ENCODE measurements at regions of chr9 and their contacts with region 1.

Region 1: DNA sequence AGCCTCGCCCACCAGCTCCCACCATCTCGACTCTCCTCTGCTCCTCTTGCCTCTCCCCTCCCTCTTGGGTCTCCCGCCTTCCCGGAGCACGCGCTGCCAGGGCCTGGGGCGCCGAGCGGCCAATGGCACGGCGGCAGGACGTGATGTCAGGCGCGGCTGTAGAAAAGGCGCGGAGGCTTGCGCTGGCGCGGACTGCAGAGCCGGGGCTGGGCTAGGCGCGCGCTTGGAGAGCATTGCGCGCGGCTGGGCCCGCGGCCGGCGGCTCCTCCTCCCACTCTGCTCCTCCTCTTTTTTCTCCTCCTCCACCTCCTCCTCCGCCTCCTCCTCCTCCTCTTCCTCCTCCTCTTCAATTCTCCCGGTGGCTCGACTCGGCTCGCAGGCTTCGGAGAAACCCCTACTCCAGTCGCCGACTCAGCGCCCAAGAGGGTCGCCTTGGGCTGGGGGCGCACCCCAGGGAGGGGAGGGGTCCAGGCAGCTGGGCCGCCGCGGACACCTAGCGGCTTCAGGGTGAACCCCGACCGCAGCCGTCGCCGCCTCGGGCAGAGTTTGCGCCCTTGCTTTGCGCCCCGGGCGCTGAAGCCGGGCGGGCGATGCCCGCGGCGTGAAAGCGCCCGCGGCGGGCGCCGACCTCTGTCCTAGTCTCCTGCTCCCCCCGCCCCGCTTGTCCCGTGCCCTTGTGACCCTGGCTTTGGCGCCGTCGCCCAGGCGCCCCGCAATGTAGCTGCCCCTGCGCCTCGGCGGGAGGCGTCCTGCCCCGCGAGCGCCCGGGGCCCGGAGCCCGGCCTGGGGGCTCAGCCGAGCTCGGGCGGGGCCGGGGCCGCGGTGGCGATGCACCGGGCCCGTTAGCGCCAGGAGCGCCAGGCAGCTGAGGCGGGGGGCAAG is at the start of gene LHX2:
- DNase-seq: peak; percentile 85

Region 2: DNA sequence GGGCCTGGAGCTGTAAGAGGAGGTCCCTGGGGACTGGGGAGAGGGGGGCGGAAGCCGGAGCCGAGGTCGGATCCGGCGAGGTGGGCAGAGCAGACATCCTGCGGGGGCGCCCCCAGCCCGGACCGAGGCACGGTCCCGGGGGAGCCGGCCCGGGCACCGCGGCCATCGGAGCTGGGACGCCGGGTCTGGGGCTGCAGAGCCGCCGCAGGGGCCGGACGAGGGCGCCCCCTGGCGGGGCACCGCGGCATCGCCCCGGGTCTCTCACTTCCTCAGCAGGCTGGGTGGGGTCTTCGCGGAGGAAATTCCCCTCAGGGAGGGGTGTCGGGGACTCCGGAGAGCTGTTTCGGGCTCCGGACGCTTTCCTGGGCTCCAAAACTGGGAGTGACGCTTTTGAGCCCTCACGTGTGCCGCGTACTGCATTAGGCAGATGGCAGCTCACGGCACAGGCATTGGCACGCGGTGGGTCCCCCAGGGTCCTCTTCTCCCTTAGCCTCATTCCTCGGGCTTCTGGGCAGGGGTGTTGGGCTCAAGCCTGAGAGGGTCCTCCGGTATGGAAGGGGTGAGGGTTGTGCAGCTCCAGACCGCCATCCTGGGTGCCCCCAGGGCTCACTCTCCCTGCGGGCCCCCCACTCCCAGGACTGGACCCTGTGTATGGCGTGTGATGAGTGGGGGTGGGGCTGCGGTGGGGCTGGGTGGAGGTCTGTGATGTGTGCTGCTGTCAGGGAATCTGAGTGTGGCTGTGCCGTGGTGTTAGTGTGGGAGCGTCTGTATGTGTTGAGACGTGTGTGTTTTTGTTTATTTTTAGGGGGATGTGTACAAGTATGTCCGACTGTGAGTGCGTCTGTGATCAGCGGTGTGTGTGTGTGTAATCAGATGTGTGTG is 29.5 kb after region 1 on chr9:
- CTCF ChIA-PET with region 1: interaction called, 3 read pairs
- POLR2A ChIA-PET with region 1: interaction called, 12 read pairs
- DNase-seq: peak; percentile 87